Psoas muscle (tissue), 8 donors: ENCODE measurements at regions of chr1 and their contacts with region 1.

Region 1: DNA sequence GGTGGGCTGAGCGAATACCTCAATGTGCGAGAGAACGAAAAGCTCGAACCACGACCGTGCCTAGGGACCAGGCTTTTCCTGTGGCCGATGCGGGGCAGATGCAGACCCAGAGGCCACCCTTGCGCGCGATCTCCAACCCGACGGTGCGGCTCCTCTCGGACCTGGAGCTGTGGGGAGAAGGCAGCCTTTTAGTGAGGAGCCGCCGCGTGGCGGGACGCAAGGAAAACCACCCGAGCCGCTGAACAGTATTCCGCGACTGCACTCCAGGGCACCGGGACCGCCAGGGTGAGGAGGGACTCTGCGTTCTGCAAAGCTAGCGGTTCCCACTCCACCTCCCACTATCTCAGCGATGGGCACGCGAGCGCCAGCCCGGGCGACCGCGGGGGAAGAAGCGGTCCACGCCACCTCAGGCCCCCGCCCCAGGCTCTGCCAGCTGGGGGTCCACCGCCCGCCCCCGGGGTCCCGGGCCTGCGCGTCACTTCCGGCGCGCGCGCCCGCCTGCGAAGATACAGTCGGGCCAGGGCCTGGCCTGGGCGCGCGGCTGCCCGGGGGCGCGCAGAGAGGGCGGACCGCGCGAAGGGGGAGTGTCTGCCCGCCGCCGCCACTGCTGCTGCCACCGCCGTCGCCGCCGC is 66.5 kb upstream of the PRKACB start:
- DNase-seq: peak; percentile 84
- ATAC-seq: peak; percentile 97 to 99 (median 98)
- H3K4me3 ChIP-seq: peak overlapping the region; percentile 88
- H3K27ac ChIP-seq: peak overlapping the region; percentile 91
- H3K4me1 ChIP-seq: peaks cover 12% of the 10 kb centered on the region
- H3K27me3 ChIP-seq: no peaks in the 10 kb centered on the region
- CTCF ChIP-seq: no peak

Region 2: GRCh38 chr1:83998498-83999315 is 78.9 kb before region 1 on chr1 and contains the start of gene TTLL7:
- intact Hi-C with region 1: loop called in 1 of 2 experiments (anchors 2 kb)
- DNase-seq: peak; percentile 85 to 91
- ATAC-seq: peak; percentile 96 to 99 (median 97)
- H3K4me3 ChIP-seq: peak within 1 kb of the TSS; percentile 94
- H3K27ac ChIP-seq: peak within 1 kb of the TSS; percentile 86
- H3K4me1 ChIP-seq: peaks cover 4% of the 10 kb centered on the region
- H3K27me3 ChIP-seq: no peaks in the 10 kb centered on the region
- CTCF ChIP-seq: no peak
- total RNA-seq, gene TTLL7: 5.0 to 13.0 (median 8.6) TPM

Region 3: DNA sequence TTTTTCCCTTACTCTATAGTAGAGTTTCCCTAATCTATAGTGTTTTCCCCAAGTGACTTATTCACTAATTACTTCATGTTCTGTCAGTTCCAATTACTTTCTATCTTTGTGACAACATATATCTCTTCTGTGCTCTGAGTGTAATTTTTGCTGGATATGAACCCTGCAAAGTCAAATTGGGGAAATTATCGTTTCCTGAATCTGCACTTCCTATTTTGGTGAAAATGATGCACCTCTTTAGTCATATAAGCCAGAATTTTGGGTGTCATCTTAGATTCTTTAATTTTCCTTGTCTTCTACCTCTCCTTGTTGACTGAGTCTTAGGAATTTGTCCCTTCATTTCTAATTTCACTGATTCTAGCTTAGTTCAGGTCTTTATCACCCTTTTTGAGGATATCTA is 33.0 kb after region 1 on chr1:
- intact Hi-C with region 1: loop called in 1 of 2 experiments (anchors 5 kb)
- DNase-seq: no peak
- ATAC-seq: no peak
- H3K4me3 ChIP-seq: no peak overlapping the region
- H3K27ac ChIP-seq: no peak overlapping the region
- H3K4me1 ChIP-seq: no peaks in the 10 kb centered on the region
- H3K27me3 ChIP-seq: no peaks in the 10 kb centered on the region
- CTCF ChIP-seq: no peak

Region 4: GRCh38 chr1:84133479-84133878 is 55.9 kb after region 1 on chr1:
- intact Hi-C with region 1: no loop called
- DNase-seq: no peak
- ATAC-seq: no peak
- H3K4me3 ChIP-seq: no peak overlapping the region
- H3K27ac ChIP-seq: no peak overlapping the region
- H3K4me1 ChIP-seq: no peaks in the 10 kb centered on the region
- H3K27me3 ChIP-seq: no peaks in the 10 kb centered on the region
- CTCF ChIP-seq: no peak